Natural killer cell (primary cell): ENCODE measurements at regions of chr7 and their contacts with region 1.

Region 1: GRCh38 chr7:131100357-131101054 is 227.2 kb upstream of the MKLN1 start:
- DNase-seq: peak in 1 of 2 donors; percentile 79
- ATAC-seq: peak; percentile 46 to 66 (median 57)
- H3K4me3 ChIP-seq: no peak overlapping the region
- H3K4me3 Mint-ChIP-seq: peak overlapping the region; percentile 83
- H3K27ac ChIP-seq: peak overlapping the region; percentile 84
- H3K27ac Mint-ChIP-seq: peak overlapping the region; percentile 94 to 99
- H3K4me1 ChIP-seq: peaks cover 46% of the 10 kb centered on the region
- H3K4me1 Mint-ChIP-seq: peaks cover 92 to 96% of the 10 kb centered on the region in 2 donors
- H3K27me3 ChIP-seq: no peaks in the 10 kb centered on the region
- H3K27me3 Mint-ChIP-seq: no peaks in the 10 kb centered on the region
- CTCF ChIP-seq: no peak

Region 2: GRCh38 chr7:131083781-131084180 is 16.7 kb before region 1 on chr7:
- intact Hi-C with region 1: loop called (anchors 2 kb)
- DNase-seq: no peak
- ATAC-seq: no peak
- H3K4me3 ChIP-seq: no peak overlapping the region
- H3K4me3 Mint-ChIP-seq: peak overlapping the region; percentile 14
- H3K27ac ChIP-seq: no peak overlapping the region
- H3K27ac Mint-ChIP-seq: peak overlapping the region in 1 of 2 donors; percentile 32
- H3K4me1 ChIP-seq: no peaks in the 10 kb centered on the region
- H3K4me1 Mint-ChIP-seq: peaks cover 44 to 46% of the 10 kb centered on the region in 2 donors
- H3K27me3 ChIP-seq: no peaks in the 10 kb centered on the region
- H3K27me3 Mint-ChIP-seq: no peaks in the 10 kb centered on the region
- CTCF ChIP-seq: no peak